ENCODE measurements at regions of chr1 and their contacts with region 1.

Region 1: DNA sequence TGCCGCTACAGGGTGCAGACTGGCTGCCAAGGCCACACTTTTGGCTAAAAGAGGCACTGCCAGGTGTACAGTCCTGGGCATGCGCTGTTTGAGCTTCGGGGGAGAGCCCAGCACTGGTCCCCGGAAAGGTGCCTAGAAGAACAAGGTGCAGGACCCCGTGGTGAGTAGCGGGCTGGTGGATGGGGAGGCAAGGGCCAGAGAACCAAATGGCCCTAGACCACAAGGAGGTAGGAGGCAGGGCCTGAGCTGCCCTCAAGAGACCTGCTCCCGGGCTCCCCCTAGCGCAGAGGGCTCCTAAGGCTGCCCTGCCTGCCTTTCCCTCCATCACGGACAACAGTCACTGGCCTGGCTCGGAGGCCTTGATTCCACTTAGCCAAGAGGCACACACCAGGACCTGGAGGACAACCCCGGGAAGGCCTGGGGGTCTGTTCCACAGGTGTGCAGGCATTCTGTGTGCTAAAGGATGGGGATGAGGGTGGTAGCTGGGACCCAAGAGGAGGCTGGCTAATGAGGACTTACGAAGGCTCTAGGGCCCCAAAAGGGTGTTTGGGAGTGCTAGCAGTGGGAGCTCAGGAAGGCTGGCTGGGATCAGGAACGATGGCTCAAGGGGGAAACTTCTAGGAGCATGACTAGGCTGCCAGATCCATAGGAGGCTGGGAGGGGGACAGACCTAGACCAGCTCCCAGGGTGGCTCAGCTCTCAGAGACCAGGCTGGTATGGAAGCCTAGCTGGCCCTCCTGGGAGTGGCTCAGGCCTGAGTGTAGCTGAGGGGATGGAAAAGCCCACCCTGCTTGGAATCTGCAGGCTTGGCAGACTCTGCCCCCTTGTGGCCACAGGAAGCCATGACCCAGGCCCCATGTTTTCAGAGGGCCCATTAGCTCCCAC is 742 bp downstream of the ARTN start:
- DNase-seq: peak in 25 of 35 experiments; percentile 9 to 65 (median 39)
- ATAC-seq: peak; percentile 38 to 72 (median 44)
- H3K4me3 ChIP-seq: no peak overlapping the region
- H3K4me3 Mint-ChIP-seq: peak overlapping the region in 1 of 3 donors; percentile 65
- H3K27ac ChIP-seq: no peak overlapping the region
- H3K27ac Mint-ChIP-seq: no peak overlapping the region
- H3K4me1 ChIP-seq: peaks cover 0 to 32% of the 10 kb centered on the region in 2 experiments
- H3K4me1 Mint-ChIP-seq: peaks cover 18 to 25% (median 23%) of the 10 kb centered on the region in 3 donors
- H3K27me3 ChIP-seq: peaks cover 3 to 51% of the 10 kb centered on the region in 2 experiments
- H3K27me3 Mint-ChIP-seq: peaks cover 22 to 34% of the 10 kb centered on the region in 2 donors

Region 2: GRCh38 chr1:43763497-43763973 is 170.8 kb before region 1 on chr1:
- CTCF ChIA-PET with region 1: interaction called, 12 to 59 read pairs
- POLR2A ChIA-PET with region 1: no interaction called
- DNase-seq: peak in 31 of 35 experiments; percentile 2 to 68 (median 20)
- ATAC-seq: peak; percentile 60 to 84 (median 73)
- H3K4me3 ChIP-seq: no peak overlapping the region
- H3K4me3 Mint-ChIP-seq: no peak overlapping the region
- H3K27ac ChIP-seq: no peak overlapping the region
- H3K27ac Mint-ChIP-seq: no peak overlapping the region
- H3K4me1 ChIP-seq: peaks cover 3% of the 10 kb centered on the region in 2 experiments
- H3K4me1 Mint-ChIP-seq: peaks cover 2 to 13% (median 5%) of the 10 kb centered on the region in 3 donors
- H3K27me3 ChIP-seq: no peaks in the 10 kb centered on the region
- H3K27me3 Mint-ChIP-seq: no peaks in the 10 kb centered on the region

Region 3: DNA sequence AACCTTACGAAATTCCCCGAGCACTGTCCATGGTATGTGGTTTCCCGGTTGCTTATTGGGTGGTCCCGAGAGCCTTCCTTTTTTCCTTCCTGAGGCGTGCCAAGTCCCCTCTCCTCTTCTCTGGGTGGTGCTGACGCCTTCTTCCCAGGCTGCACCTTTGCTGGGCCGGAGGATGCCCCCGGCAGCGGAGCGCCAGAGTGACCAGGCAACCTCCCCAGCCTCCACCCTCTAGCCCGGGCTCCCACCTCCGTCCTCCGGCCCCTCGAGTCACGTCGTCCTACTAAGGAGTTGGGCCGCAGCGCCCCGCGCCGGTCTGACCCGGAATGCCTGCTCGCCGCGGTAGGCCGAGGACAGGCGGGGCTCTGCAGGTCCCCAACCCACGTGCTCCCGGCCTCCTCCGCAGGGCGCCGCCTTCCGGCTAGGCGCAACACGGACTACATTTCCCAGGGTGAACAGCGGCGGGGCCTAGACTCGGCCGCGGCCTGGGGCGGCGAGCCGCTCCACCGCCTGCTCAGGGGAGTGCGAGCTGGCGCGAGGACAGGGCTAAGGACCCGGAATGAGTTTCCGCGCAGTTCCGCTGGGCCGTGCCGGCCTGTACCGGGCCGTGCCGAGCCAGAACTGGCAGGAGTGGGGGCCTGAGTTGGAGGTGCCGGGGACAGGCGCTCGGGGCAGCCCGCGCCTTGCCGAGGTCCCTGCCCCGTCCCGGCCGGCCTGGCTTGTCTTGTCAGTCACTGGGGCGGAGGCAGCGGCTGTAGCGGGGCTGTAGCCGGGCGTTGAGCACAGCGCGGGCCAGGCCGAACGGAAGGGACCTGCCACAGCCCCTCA is 12.1 kb after region 1 on chr1 and contains the start of gene IPO13:
- CTCF ChIA-PET with region 1: interaction called, 3 to 17 read pairs
- POLR2A ChIA-PET with region 1: interaction called in 1 of 2 experiments, 3 read pairs
- DNase-seq: peak; percentile 89 to 98 (median 93)
- ATAC-seq: peak; percentile 96 to 99 (median 97)
- H3K4me3 ChIP-seq: peak within 1 kb of the TSS; percentile 82 to 95
- H3K4me3 Mint-ChIP-seq: peak within 1 kb of the TSS; percentile 85 to 88 (median 86)
- H3K27ac ChIP-seq: peak within 1 kb of the TSS; percentile 94
- H3K27ac Mint-ChIP-seq: peak within 1 kb of the TSS; percentile 90 to 96
- H3K4me1 ChIP-seq: peaks cover 21 to 40% of the 10 kb centered on the region in 2 experiments
- H3K4me1 Mint-ChIP-seq: peaks cover 45 to 58% (median 49%) of the 10 kb centered on the region in 3 donors
- H3K27me3 ChIP-seq: no peaks in the 10 kb centered on the region
- H3K27me3 Mint-ChIP-seq: no peaks in the 10 kb centered on the region
- total RNA-seq, gene IPO13: 15.3 to 24.3 (median 22.1) TPM

Measured in T-cell (primary cell).